HCT116 (cell line): ENCODE measurements at regions of chr14 and their contacts with region 1.

Region 1: GRCh38 chr14:67557126-67557525 is 24.0 kb downstream of the PLEKHH1 start:
- DNase-seq: no peak
- ATAC-seq: peak; percentile 72
- H3K4me3 ChIP-seq: no peak overlapping the region; a peak in 1 of 4 replicates
- H3K27ac ChIP-seq: no peak overlapping the region
- H3K4me1 ChIP-seq: peaks cover 4 to 16% of the 10 kb centered on the region in 2 experiments; a peak in 3 of 4 replicates
- H3K27me3 ChIP-seq: no peaks in the 10 kb centered on the region
- CTCF ChIP-seq: no peak
- POLR2A ChIP-seq: no peak
- RAD21 ChIP-seq: no peak

Region 2: DNA sequence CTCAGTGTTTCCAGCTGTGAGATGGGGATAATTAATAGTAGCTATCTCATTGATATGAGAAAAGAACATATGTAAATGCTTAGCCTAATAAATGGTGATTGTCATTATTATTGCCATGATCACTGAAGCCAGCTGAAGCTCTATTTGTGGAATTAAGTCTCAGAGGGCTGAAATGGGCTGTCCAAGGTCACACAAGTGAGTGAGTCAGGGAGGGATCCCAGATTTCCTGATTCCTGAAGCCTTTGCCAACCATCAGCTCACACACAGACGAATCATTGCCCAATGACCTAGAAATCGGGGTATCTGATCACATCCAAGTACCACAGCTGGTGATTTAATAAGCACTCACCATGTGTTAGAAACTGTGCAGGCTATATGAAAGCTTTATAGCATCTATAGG is 47.0 kb before region 1 on chr14:
- CTCF ChIA-PET with region 1: no interaction called
- POLR2A ChIA-PET with region 1: no interaction called
- RAD21 ChIA-PET with region 1: no interaction called
- intact Hi-C with region 1: no loop called
- DNase-seq: no peak
- ATAC-seq: no peak
- H3K4me3 ChIP-seq: no peak overlapping the region
- H3K27ac ChIP-seq: no peak overlapping the region
- H3K4me1 ChIP-seq: peaks cover 0 to 22% of the 10 kb centered on the region in 2 experiments; a peak in 1 of 4 replicates
- H3K27me3 ChIP-seq: no peaks in the 10 kb centered on the region
- CTCF ChIP-seq: no peak
- POLR2A ChIP-seq: no peak
- RAD21 ChIP-seq: no peak

Region 3: GRCh38 chr14:67571272-67571850 is 14.2 kb after region 1 on chr14:
- CTCF ChIA-PET with region 1: interaction called, 16 read pairs
- POLR2A ChIA-PET with region 1: no interaction called
- RAD21 ChIA-PET with region 1: no interaction called
- intact Hi-C with region 1: no loop called
- DNase-seq: peak; percentile 26
- ATAC-seq: peak; percentile 98
- H3K4me3 ChIP-seq: no peak overlapping the region
- H3K27ac ChIP-seq: no peak overlapping the region
- H3K4me1 ChIP-seq: peaks cover 0 to 4% of the 10 kb centered on the region in 2 experiments; a peak in 1 of 4 replicates
- H3K27me3 ChIP-seq: no peaks in the 10 kb centered on the region
- CTCF ChIP-seq: peak; percentile 86 to 96 (median 91)
- POLR2A ChIP-seq: no peak
- RAD21 ChIP-seq: peak; percentile 92